ENCODE measurements at regions of chr5 and their contacts with region 1.

Region 1: GRCh38 chr5:78221964-78222451 is 72.5 kb downstream of the AP3B1 start:
- DNase-seq: peak; percentile 47
- ATAC-seq: peak; percentile 100
- H3K4me3 Mint-ChIP-seq: peak overlapping the region; percentile 1
- H3K27ac Mint-ChIP-seq: peak overlapping the region; percentile 54
- H3K4me1 Mint-ChIP-seq: peaks cover 18% of the 10 kb centered on the region
- H3K27me3 Mint-ChIP-seq: no peaks in the 10 kb centered on the region
- CTCF ChIP-seq: no peak

Region 2: GRCh38 chr5:77852514-77853352 is 369.3 kb before region 1 on chr5:
- CTCF ChIA-PET with region 1: no interaction called
- POLR2A ChIA-PET with region 1: no interaction called
- intact Hi-C with region 1: loop called (anchors 1 kb)
- DNase-seq: peak; percentile 68
- ATAC-seq: peak; percentile 89
- H3K4me3 Mint-ChIP-seq: peak overlapping the region; percentile 81
- H3K27ac Mint-ChIP-seq: peak overlapping the region; percentile 92
- H3K4me1 Mint-ChIP-seq: peaks cover 17% of the 10 kb centered on the region
- H3K27me3 Mint-ChIP-seq: no peaks in the 10 kb centered on the region
- CTCF ChIP-seq: no peak

Region 3: GRCh38 chr5:78137290-78137689 is 84.7 kb before region 1 on chr5:
- CTCF ChIA-PET with region 1: interaction called, 3 read pairs
- POLR2A ChIA-PET with region 1: interaction called, 11 read pairs
- intact Hi-C with region 1: no loop called
- DNase-seq: no peak
- ATAC-seq: no peak
- H3K4me3 Mint-ChIP-seq: no peak overlapping the region
- H3K27ac Mint-ChIP-seq: no peak overlapping the region
- H3K4me1 Mint-ChIP-seq: no peaks in the 10 kb centered on the region
- H3K27me3 Mint-ChIP-seq: no peaks in the 10 kb centered on the region
- CTCF ChIP-seq: no peak

Region 4: DNA sequence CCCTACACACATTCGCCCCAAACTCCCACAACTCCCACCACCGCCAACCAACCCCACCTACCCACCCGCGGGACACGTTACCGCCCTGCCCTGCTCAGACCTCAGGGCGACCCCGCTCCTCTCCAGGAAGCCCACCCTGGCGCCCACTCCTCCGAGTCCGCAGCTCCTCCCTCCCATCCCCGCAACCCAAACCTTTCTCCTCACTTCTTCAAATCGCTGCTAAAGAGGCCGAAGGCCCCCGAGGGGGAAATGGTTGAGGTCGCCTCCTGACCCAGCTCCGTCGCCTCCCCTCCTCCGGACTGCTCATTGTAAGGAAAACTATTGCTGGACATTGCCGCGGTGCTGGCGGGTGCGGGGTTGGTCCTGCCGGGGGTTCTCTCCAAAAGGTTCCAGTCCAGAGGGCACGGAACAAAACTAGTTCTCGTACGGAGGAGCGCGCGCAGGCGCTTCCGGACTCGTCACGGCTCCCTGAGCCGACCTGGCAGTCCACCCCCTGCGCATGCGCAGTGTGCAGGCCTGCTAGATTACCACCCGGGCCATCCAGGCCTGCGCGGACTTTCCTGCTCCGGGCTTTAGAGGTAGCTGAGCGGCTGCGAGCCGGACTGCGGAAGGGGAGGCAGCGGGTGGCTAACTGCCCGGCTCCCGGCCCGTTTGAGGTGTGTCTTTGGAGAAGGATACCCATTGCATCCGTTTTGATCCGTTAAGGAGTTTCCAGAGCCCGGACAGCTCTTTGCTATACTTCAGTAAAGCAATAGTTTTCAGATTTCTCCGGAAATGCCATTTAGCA is 72.4 kb after region 1 on chr5 and contains the start of gene AP3B1:
- CTCF ChIA-PET with region 1: no interaction called
- POLR2A ChIA-PET with region 1: interaction called, 6 read pairs
- intact Hi-C with region 1: loop called (anchors 1 kb)
- DNase-seq: peak; percentile 96
- ATAC-seq: peak; percentile 94
- H3K4me3 Mint-ChIP-seq: peak within 1 kb of the TSS; percentile 98
- H3K27ac Mint-ChIP-seq: peak within 1 kb of the TSS; percentile 98
- H3K4me1 Mint-ChIP-seq: peaks cover 44% of the 10 kb centered on the region
- H3K27me3 Mint-ChIP-seq: no peaks in the 10 kb centered on the region
- CTCF ChIP-seq: no peak
- total RNA-seq, gene AP3B1: 46.8 and 52.9 TPM in 2 replicates

Region 5: DNA sequence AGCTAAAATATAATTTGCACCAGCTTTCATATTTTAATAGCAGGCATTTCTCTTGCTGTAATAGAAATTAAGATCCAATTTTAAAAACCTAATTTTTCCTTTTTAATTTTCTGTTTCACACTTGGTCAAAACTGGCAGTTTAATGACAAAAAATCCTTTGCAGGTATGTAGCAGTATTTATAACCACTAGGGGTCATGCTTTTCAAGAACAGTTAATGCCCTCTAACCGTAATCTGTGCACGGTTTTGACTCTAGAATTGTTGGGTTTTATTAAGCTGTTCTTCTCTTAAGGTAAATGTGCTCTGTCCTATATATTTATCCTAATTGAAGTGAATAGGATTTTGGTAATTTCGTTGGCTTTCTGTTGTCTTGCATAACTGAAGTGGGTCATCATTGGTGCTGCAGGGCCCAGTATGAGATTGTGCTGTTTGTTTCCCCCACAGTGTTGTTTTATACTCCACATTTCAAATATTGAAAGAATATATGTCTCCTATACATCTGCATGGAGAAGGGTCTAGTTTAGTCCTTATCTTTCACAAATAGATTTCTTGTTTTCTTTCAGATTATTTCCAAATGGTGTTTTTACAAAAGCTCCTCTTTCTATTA is 245.8 kb after region 1 on chr5:
- CTCF ChIA-PET with region 1: no interaction called
- POLR2A ChIA-PET with region 1: no interaction called
- intact Hi-C with region 1: loop called (anchors 5 kb)
- DNase-seq: no peak
- ATAC-seq: peak; percentile 49
- H3K4me3 Mint-ChIP-seq: no peak overlapping the region
- H3K27ac Mint-ChIP-seq: no peak overlapping the region
- H3K4me1 Mint-ChIP-seq: peaks cover 3% of the 10 kb centered on the region
- H3K27me3 Mint-ChIP-seq: no peaks in the 10 kb centered on the region
- CTCF ChIP-seq: peak; percentile 32

Region 6: DNA sequence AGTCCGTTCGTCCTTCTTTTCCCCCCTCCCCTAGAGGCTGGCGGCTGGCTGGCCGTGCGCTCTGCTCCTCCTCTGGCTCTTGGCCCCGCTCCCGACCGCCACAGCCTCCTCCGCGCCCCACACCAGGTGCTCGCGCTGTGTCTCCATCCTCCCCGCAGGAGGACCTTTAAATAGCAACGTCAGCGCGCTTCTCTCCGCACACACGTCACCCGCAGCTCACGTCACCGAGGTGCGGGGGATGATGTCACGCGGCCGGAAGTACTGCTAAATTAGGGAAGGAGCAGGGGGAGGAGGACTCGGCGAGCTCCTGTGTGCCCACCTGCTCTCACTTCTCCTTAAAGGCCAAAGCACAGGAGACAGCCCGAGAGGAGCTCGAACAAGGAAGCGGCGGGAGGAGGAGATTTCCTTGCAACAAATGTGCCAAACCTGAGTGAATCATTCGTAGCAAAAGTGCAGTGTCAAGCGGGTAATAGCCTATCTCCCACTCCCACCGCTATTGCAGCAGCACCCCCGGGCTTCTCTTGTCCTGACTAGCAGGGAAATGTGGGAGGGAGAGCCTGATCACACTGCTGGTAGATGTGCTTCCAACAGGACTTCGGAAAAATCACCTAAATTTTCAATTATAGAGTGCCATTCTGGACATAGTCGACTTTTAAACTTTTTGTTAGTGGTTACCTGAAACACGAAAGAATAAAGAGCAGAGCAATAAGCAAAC is 1292.5 kb after region 1 on chr5:
- CTCF ChIA-PET with region 1: no interaction called
- POLR2A ChIA-PET with region 1: no interaction called
- intact Hi-C with region 1: loop called (anchors 5 kb)
- DNase-seq: peak; percentile 85
- ATAC-seq: peak; percentile 77
- H3K4me3 Mint-ChIP-seq: peak overlapping the region; percentile 91
- H3K27ac Mint-ChIP-seq: peak overlapping the region; percentile 89
- H3K4me1 Mint-ChIP-seq: peaks cover 28% of the 10 kb centered on the region
- H3K27me3 Mint-ChIP-seq: peaks cover 24% of the 10 kb centered on the region
- CTCF ChIP-seq: no peak